ENCODE measurements at regions of chr5 and their contacts with region 1.

Region 1: GRCh38 chr5:156913719-156914370 is 49.2 kb downstream of the TIMD4 start:
- DNase-seq: peak; percentile 86
- H3K4me3 Mint-ChIP-seq: peak overlapping the region; percentile 55
- H3K27ac Mint-ChIP-seq: peak overlapping the region; percentile 92
- H3K4me1 Mint-ChIP-seq: peaks cover 58% of the 10 kb centered on the region
- H3K27me3 Mint-ChIP-seq: no peaks in the 10 kb centered on the region

Region 2: GRCh38 chr5:156893517-156893916 is 20.3 kb before region 1 on chr5:
- intact Hi-C with region 1: loop called (anchors 2 kb)
- DNase-seq: peak; percentile 65
- H3K4me3 Mint-ChIP-seq: peak overlapping the region; percentile 59
- H3K27ac Mint-ChIP-seq: peak overlapping the region; percentile 88
- H3K4me1 Mint-ChIP-seq: peaks cover 42% of the 10 kb centered on the region
- H3K27me3 Mint-ChIP-seq: no peaks in the 10 kb centered on the region

Measured in activated CD4-positive, alpha-beta T cell treated with anti-CD3 and anti-CD28 coated beads, Interleukin-2, amount 10 ng/mL, durations not matched to agents 24 days and 14 days (primary cell).